Activated naive CD4-positive, alpha-beta T cell treated with anti-CD3 and anti-CD28 coated beads for 36 hours (primary cell): ENCODE measurements at regions of chr2 and their contacts with region 1.

Region 1: DNA sequence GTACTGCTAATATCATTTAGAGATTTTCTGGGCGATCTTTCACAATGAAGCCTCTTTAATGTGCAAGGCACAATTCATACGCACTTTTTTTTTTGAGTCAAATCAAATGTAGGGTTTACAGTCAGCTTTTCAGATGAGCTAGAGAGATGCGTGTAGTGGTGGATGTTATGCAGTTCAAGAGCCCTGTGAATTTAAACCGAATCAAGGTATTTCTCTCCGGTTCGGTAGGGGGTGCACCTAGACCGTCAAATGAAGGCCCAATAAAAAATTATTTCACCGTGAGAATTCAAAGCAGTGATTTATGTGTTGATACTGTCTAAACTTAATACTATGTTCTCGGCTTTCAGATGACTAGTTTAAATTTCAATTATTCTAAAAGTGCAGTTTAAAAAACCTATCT is 1.1 kb downstream of the PTH2R start:
- DNase-seq: peak; percentile 20
- H3K4me3 Mint-ChIP-seq: no peak overlapping the region
- H3K27ac Mint-ChIP-seq: no peak overlapping the region
- H3K4me1 Mint-ChIP-seq: peaks cover 10% of the 10 kb centered on the region
- H3K27me3 Mint-ChIP-seq: peaks cover 44% of the 10 kb centered on the region

Region 2: DNA sequence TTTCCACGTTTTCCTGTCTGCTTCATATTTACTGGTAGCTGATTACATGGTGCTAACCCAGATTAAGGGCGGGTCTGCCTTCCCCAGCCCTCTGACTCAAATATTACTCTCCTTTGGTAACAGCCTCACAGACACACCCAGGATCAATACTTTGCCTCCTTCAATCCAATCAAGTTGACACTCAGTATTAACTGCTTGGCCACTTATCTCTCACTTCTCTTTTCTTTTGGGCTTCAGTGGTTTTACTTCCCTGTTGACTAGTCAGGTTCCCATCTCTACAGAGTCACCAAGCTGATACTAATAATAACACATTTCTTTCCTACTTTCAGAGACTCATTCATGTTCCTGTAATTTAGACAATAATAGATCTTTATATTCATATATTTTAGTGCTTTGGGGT is 714.0 kb after region 1 on chr2:
- CTCF ChIA-PET with region 1: no interaction called
- intact Hi-C with region 1: no loop called
- DNase-seq: no peak
- H3K4me3 Mint-ChIP-seq: no peak overlapping the region
- H3K27ac Mint-ChIP-seq: no peak overlapping the region
- H3K4me1 Mint-ChIP-seq: no peaks in the 10 kb centered on the region
- H3K27me3 Mint-ChIP-seq: no peaks in the 10 kb centered on the region

Region 3: GRCh38 chr2:209208211-209208610 is 800.5 kb after region 1 on chr2:
- CTCF ChIA-PET with region 1: no interaction called
- intact Hi-C with region 1: loop called (anchors 5 kb)
- DNase-seq: peak; percentile 23
- H3K4me3 Mint-ChIP-seq: no peak overlapping the region
- H3K27ac Mint-ChIP-seq: no peak overlapping the region
- H3K4me1 Mint-ChIP-seq: no peaks in the 10 kb centered on the region
- H3K27me3 Mint-ChIP-seq: no peaks in the 10 kb centered on the region